Left lung (tissue), 14 donors: ENCODE measurements at regions of chr12 and their contacts with region 1.

Region 1: DNA sequence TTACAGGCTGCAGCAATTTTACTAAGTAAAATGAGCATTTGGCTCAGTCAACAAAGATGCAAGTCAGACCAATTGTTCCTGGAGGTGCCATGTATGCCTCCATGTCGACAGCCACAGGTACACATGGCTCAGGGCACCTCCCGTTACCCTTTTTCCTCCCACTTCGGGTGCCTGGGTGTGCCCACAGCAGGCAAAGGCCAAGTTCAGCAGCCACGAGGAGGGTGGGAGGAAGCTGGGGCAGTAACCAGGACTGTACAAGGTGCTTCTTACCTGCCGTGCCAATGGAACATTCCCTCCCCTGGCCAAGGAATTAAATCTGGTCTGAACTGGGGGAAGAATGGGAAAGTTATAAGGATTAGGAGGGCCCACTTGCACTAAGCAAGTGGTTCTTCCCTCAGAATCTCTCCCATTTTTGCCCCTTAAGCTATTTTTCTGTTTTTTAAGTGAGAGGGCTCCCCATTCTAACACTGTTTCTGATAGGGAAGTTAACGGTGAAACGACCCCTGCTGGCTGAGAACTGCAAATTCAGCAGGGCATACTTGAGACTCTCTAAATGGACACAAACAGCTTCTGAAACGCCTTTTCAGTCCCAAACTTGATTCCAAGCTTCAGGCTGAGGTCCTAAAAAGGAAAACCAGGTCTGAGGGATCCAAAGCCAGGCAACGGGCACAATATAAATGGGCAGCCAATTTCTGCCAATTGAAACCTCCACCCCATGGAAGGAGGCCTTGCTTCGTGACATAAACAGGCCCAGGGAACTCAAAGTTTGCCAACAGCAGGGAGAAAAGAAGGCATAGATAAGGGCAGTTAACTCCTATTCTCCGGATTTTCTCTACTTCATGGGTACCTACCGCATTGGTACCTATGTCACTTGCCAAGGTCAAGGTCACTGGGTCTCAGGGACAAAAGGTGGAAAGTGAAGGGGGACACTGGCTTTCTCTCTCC is 24.8 kb downstream of the CLECL1 start:
- DNase-seq: peak in 3 of 4 donors; percentile 15 to 57 (median 43)
- ATAC-seq: peak; percentile 93
- H3K4me3 ChIP-seq: no peak overlapping the region
- H3K27ac ChIP-seq: no peak overlapping the region
- H3K4me1 ChIP-seq: peaks cover 5 to 20% of the 10 kb centered on the region in 2 donors
- H3K27me3 ChIP-seq: no peaks in the 10 kb centered on the region
- CTCF ChIP-seq: peak; percentile 79 to 86

Region 2: DNA sequence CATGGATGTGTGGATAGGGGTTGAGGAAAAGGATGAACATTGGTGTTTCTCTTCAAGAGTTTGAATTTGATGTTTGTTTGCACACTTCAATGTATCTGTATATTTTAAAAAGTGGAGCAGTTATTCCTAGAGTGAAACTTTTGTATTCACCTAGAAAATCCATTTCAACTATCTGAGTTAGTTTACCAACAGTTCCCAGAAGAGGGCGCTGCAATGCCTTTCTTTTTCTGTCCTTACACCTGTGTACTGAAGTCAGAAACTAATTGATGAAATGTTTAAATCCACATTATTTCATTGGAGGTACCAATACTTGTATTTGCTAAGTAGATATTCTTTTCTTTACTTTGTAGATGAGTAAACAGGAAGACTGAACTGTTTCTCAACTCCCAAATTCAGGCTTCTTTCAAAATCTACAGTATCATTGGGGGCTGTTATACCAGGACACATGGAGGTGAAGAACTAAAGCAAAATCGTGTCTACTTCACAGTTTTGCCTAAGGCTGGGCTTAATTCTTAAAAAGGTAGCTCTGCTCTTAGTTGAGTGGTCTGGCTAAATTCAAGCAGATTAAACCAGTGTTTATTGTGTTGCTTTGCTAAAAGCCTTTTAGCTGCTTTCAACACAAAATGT is 73.8 kb before region 1 on chr12:
- intact Hi-C with region 1: loop called in 1 of 2 experiments (anchors 2 kb)
- DNase-seq: peak in 2 of 4 donors; percentile 33 to 43
- ATAC-seq: peak; percentile 92
- H3K4me3 ChIP-seq: no peak overlapping the region
- H3K27ac ChIP-seq: no peak overlapping the region
- H3K4me1 ChIP-seq: peaks cover 0 to 29% of the 10 kb centered on the region in 2 donors
- H3K27me3 ChIP-seq: no peaks in the 10 kb centered on the region
- CTCF ChIP-seq: peak; percentile 69 to 70